ENCODE measurements at regions of chr7 and their contacts with region 1.

Region 1: GRCh38 chr7:157138424-157139110 is at the start of gene UBE3C:
- DNase-seq: peak; percentile 91
- ATAC-seq: peak; percentile 89
- H3K4me3 Mint-ChIP-seq: peak within 1 kb of the TSS; percentile 81
- H3K27ac Mint-ChIP-seq: peak within 1 kb of the TSS; percentile 88
- H3K4me1 Mint-ChIP-seq: peaks cover 37% of the 10 kb centered on the region
- H3K27me3 Mint-ChIP-seq: no peaks in the 10 kb centered on the region
- CTCF ChIP-seq: no peak
- total RNA-seq, gene UBE3C: 52.8 and 65.3 TPM in 2 replicates

Region 2: DNA sequence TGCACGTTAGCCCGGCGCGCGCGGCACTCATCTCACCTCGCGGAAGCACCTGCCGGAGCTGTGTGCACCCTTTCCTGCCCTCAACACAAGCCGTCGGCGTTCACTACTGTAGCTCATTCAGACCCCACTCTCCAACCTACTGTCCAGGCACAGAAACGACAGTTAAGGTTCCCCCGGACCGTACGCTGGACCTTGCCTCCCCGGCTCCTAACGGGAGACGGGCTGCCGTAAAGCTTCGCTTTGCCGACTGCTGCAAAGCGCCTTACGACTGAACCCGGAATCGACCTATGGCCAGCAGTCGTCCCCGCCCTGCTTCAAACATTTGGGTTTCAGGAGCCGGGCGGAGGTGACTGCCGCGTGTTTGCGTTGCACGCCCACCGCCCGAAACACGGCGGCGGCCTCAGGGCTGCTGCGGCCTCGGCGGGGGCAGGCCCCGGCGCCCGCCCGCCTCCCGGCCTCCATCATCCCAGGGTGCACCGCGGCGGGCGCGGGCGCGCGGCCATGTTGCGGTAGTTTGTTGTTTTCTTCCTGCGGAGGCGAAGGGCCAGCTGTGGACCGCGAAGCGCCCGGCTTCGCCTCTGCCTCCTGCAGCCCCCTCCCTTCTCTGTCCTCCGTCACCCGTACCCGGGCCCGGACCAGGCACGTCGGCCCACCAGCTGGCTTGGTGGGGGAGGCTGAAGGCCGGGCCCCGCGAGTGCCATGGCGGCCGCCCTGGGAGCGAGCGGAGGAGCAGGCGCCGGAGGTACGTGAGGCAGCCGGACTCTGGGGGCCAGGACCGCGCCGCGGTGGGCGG is 1494.2 kb before region 1 on chr7 and contains the start of gene RBM33:
- CTCF ChIA-PET with region 1: no interaction called
- POLR2A ChIA-PET with region 1: no interaction called
- intact Hi-C with region 1: loop called (anchors 2 kb)
- DNase-seq: peak; percentile 86
- ATAC-seq: peak; percentile 74
- H3K4me3 Mint-ChIP-seq: peak within 1 kb of the TSS; percentile 98
- H3K27ac Mint-ChIP-seq: peak within 1 kb of the TSS; percentile 98
- H3K4me1 Mint-ChIP-seq: peaks cover 47% of the 10 kb centered on the region
- H3K27me3 Mint-ChIP-seq: no peaks in the 10 kb centered on the region
- CTCF ChIP-seq: no peak
- total RNA-seq, gene RBM33: 107 and 117 TPM in 2 replicates

Region 3: DNA sequence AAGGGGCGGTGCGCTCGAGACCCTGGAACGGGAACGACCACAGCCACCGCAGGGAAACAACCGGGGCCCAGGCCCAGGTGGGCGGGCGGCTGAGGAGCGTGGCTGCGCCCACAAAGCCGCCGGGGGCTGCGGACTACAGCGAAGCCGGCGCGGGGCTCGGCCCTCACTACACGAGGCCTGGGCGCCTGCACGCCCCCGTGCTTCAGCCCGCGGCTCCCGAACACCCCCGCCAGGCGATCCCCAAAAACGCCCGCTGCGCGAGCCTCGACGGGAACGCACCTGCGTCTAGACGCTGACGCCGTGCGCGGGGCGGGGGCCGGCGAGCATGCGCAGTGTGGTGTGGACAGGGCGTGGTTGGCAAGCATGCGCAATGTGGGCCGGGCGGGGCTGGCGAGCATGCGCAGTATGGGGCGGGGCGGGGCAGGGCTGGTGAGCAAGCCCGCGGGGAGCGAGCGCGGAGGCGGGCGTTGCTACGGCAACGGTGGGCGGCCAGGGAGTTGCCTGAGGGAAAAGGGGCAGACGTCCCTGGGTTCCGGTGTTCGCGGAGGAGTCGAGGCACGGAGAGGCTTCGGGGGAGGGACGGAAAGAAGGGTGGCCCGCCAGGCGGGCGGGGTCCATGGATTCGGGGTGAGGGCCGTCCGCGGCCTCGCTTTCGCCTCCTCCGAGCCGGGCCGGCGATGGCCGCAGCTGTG is 498.2 kb before region 1 on chr7 and contains the start of gene RNF32:
- CTCF ChIA-PET with region 1: no interaction called
- POLR2A ChIA-PET with region 1: no interaction called
- intact Hi-C with region 1: loop called (anchors 2 kb)
- DNase-seq: peak; percentile 98
- ATAC-seq: peak; percentile 84
- H3K4me3 Mint-ChIP-seq: peak within 1 kb of the TSS; percentile 92
- H3K27ac Mint-ChIP-seq: peak within 1 kb of the TSS; percentile 96
- H3K4me1 Mint-ChIP-seq: peaks cover 29% of the 10 kb centered on the region
- H3K27me3 Mint-ChIP-seq: no peaks in the 10 kb centered on the region
- CTCF ChIP-seq: no peak
- total RNA-seq, gene RNF32: 1.0 and 2.9 TPM in 2 replicates

Region 4: GRCh38 chr7:156949541-156950380 is 188.8 kb before region 1 on chr7 and contains the start of gene NOM1:
- CTCF ChIA-PET with region 1: no interaction called
- POLR2A ChIA-PET with region 1: no interaction called
- intact Hi-C with region 1: loop called (anchors 2 kb)
- DNase-seq: peak; percentile 95
- ATAC-seq: peak; percentile 94
- H3K4me3 Mint-ChIP-seq: peak within 1 kb of the TSS; percentile 93
- H3K27ac Mint-ChIP-seq: peak within 1 kb of the TSS; percentile 78
- H3K4me1 Mint-ChIP-seq: peaks cover 24% of the 10 kb centered on the region
- H3K27me3 Mint-ChIP-seq: peaks cover 8% of the 10 kb centered on the region
- CTCF ChIP-seq: no peak
- total RNA-seq, gene NOM1: 34.7 and 39.1 TPM in 2 replicates

Region 5: GRCh38 chr7:157299613-157300368 is 161.2 kb after region 1 on chr7:
- CTCF ChIA-PET with region 1: no interaction called
- POLR2A ChIA-PET with region 1: no interaction called
- intact Hi-C with region 1: loop called (anchors 5 kb)
- DNase-seq: no peak
- ATAC-seq: no peak
- H3K4me3 Mint-ChIP-seq: no peak overlapping the region
- H3K27ac Mint-ChIP-seq: no peak overlapping the region
- H3K4me1 Mint-ChIP-seq: peaks cover 19% of the 10 kb centered on the region
- H3K27me3 Mint-ChIP-seq: peaks cover 2% of the 10 kb centered on the region
- CTCF ChIP-seq: no peak

Region 6: DNA sequence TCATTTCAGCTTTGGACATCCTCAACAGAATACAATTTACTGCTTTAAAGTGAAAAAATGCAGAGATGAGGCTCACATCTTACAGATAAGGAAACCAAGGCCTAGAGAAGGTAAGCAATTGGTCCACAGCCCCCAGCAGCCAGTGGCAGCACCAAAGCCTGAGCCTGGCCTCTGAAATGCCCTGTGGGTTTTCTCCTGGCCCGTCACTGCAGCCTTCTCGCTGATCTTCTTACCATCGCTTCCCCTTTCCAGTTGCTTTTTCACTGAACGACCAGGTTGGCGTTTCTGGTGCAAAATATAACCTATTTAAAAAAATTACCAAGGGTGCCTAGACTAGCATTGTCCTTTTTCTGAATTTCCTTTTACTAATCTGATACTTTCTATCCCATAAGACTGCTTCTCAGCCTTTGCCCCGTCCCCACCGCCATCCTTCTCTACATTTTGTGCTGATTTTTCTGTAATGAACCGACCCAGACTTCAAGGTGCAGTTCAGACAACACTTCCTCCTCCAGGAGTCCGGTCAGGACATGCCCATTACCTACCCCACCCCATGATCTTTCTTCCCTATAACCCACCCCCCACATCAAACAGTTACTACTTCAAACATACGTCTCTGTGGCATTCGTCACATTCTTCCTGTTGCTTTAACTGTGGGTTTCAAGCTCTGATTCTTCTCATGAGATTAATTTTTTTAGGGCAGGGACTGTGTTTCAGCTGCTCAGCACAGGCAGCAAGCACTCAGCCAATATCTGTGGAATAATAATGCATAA is 487.6 kb after region 1 on chr7:
- CTCF ChIA-PET with region 1: no interaction called
- POLR2A ChIA-PET with region 1: no interaction called
- intact Hi-C with region 1: no loop called
- DNase-seq: no peak
- ATAC-seq: no peak
- H3K4me3 Mint-ChIP-seq: no peak overlapping the region
- H3K27ac Mint-ChIP-seq: no peak overlapping the region
- H3K4me1 Mint-ChIP-seq: no peaks in the 10 kb centered on the region
- H3K27me3 Mint-ChIP-seq: peaks cover 19% of the 10 kb centered on the region
- CTCF ChIP-seq: no peak

Region 7: GRCh38 chr7:158704704-158705468 is 1566.3 kb after region 1 on chr7 and contains the start of gene NCAPG2:
- CTCF ChIA-PET with region 1: no interaction called
- POLR2A ChIA-PET with region 1: no interaction called
- intact Hi-C with region 1: loop called (anchors 2 kb)
- DNase-seq: peak; percentile 97
- ATAC-seq: peak; percentile 98
- H3K4me3 Mint-ChIP-seq: peak within 1 kb of the TSS; percentile 90
- H3K27ac Mint-ChIP-seq: peak within 1 kb of the TSS; percentile 69
- H3K4me1 Mint-ChIP-seq: peaks cover 13% of the 10 kb centered on the region
- H3K27me3 Mint-ChIP-seq: no peaks in the 10 kb centered on the region
- CTCF ChIP-seq: no peak
- total RNA-seq, gene NCAPG2: 8.2 and 11.0 TPM in 2 replicates

Measured in activated B cell treated with CpG ODN at 0.5 μM for 24 hours (primary cell).